MCF 10A (cell line): ENCODE measurements at regions of chr12 and their contacts with region 1.

Region 1: DNA sequence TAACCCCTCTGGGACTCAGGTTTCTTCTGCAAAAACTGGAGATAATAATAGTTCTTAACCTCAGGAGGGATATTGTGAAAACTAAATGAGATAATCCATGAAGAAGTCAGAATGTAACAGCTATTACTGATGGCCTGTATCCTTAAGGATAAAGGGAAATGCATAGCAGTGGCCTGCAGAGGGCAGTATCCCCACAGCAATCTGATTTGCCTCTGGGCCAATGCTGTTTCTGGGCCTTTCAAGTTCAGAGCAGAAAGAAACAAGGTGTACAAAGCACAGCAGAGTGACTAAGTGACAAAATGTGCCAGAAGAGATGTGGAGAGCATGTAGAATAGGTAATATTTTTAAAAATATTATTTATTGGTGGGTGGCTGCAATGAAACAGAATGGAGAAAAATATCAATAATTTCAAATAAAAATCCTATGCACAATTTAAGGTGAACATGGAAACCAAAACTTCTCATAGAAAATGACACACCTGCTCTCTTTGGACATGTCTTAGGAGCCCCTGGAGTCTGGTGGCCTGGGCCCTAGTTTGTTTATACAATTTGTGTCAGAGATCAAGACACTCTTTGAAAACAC is 90.3 kb downstream of the C12orf75 start:
- DNase-seq: peak; percentile 74
- H3K4me3 Mint-ChIP-seq: no peak overlapping the region
- H3K27ac Mint-ChIP-seq: no peak overlapping the region
- H3K4me1 Mint-ChIP-seq: peaks cover 40% of the 10 kb centered on the region
- H3K27me3 Mint-ChIP-seq: no peaks in the 10 kb centered on the region
- CTCF ChIP-seq: peak; percentile 86

Region 2: DNA sequence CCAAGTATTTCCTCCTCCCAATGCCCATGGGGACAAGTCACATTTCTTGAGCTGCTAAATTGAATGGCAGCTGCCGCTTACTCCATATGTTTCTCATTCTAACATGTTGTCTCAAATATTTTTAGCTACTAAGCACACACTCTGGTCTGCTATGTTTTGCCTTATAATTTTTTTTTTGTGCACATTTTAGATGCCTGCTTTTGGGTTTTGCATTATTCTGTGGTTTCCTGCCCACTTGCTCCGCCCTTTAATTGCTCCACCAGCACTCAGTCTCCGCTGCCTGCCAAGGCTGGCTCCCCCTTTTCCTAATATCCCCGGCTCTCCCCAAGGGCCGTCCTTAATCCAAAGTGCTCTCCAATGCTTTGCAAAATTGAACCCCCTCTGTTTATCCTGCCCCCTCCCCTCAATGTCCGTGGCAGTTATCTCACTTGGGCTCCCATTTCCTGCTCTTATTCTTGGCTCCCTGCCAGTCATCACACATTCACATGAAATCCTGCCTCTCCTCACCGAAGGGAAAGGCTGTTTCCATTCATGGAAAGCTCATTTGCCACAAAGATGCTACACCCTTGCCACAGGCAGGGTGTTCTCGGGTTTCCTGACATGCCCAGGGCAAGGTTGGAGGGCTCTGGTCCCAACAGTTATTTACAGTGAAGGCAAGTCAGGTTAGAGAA is 10.8 kb before region 1 on chr12:
- CTCF ChIA-PET with region 1: interaction called, 26 read pairs
- POLR2A ChIA-PET with region 1: no interaction called
- intact Hi-C with region 1: no loop called
- DNase-seq: peak; percentile 41
- H3K4me3 Mint-ChIP-seq: no peak overlapping the region
- H3K27ac Mint-ChIP-seq: no peak overlapping the region
- H3K4me1 Mint-ChIP-seq: peaks cover 10% of the 10 kb centered on the region
- H3K27me3 Mint-ChIP-seq: no peaks in the 10 kb centered on the region
- CTCF ChIP-seq: no peak

Region 3: DNA sequence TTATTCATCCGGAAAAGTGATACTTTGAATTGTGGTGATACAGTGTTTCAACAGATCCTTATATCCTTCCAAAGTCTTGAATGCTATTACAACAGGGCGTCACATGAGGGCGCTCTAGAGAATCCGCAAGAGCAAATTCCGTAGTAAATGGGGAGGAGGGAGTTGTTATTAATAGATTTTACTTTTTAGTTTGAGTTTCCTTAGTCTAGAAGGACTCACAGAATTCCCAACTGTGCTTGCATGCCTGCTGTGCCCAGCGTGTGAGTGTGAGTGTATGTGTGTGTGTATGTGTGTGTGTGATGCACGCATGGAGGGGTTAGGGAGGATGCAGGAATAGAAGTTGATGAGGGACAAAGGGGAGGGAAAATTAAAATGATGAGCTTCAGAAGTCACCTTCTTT is 285.0 kb after region 1 on chr12:
- CTCF ChIA-PET with region 1: interaction called, 3 read pairs
- POLR2A ChIA-PET with region 1: interaction called, 3 read pairs
- intact Hi-C with region 1: loop called (anchors 1 kb)
- DNase-seq: peak; percentile 56
- H3K4me3 Mint-ChIP-seq: no peak overlapping the region
- H3K27ac Mint-ChIP-seq: peak overlapping the region; percentile 73
- H3K4me1 Mint-ChIP-seq: peaks cover 6% of the 10 kb centered on the region
- H3K27me3 Mint-ChIP-seq: no peaks in the 10 kb centered on the region
- CTCF ChIP-seq: peak; percentile 74

Region 4: GRCh38 chr12:106136263-106136662 is 715.5 kb after region 1 on chr12:
- CTCF ChIA-PET with region 1: interaction called, 134 read pairs
- POLR2A ChIA-PET with region 1: interaction called, 43 read pairs
- intact Hi-C with region 1: loop called (anchors 1 kb)
- DNase-seq: peak; percentile 86
- H3K4me3 Mint-ChIP-seq: peak overlapping the region; percentile 69
- H3K27ac Mint-ChIP-seq: no peak overlapping the region
- H3K4me1 Mint-ChIP-seq: peaks cover 64% of the 10 kb centered on the region
- H3K27me3 Mint-ChIP-seq: no peaks in the 10 kb centered on the region
- CTCF ChIP-seq: peak; percentile 74

Region 5: DNA sequence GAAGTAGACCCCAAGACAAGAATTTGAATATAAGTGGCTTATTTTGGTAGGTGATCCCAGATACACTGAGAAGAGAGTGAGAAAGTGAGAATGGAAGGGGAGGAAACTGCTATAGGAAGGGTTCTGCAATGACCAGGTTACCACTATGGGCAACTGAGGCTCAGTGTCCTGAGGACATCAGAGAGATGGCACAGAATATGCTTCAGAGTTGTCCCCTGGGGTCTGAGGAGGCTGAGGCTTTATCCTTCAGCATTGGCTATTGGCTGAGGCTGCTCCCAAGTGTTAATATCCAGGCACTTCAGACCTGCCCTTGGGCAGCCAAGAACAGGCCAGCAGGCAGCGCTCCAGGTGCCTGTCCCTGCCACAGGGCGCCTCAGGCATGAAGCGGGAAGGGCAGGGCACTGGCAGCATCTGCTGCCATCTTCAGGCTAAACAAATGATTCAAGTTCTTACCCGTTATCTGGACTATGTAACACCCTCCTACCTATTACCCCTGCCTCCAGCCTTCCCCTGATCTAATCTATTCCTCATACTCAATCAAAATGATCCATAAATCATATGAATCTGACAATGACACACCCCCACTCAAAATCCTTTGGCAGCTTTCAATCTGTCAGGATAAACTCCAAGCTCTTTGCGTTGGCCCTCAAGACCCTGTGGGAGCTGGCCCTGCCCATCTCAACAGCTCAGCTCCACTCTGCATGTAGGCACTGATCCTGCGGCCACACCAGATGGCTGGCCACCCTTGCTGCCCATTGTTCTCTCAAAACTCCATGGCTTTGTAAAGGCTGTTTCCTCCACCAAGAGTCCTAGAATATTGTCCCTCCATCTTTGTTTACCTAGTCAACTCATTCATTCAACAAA is 784.7 kb after region 1 on chr12:
- CTCF ChIA-PET with region 1: interaction called, 15 read pairs
- POLR2A ChIA-PET with region 1: no interaction called
- intact Hi-C with region 1: loop called (anchors 5 kb)
- DNase-seq: peak; percentile 43
- H3K4me3 Mint-ChIP-seq: no peak overlapping the region
- H3K27ac Mint-ChIP-seq: peak overlapping the region; percentile 7
- H3K4me1 Mint-ChIP-seq: peaks cover 5% of the 10 kb centered on the region
- H3K27me3 Mint-ChIP-seq: peaks cover 24% of the 10 kb centered on the region
- CTCF ChIP-seq: peak; percentile 38